AG04449 (cell line): ENCODE measurements at regions of chr11 and their contacts with region 1.

Region 1: GRCh38 chr11:93225662-93226061 is 27.9 kb upstream of the SLC36A4 start:
- DNase-seq: no peak
- H3K4me3 ChIP-seq: no peak overlapping the region
- CTCF ChIP-seq: no peak

Region 2: DNA sequence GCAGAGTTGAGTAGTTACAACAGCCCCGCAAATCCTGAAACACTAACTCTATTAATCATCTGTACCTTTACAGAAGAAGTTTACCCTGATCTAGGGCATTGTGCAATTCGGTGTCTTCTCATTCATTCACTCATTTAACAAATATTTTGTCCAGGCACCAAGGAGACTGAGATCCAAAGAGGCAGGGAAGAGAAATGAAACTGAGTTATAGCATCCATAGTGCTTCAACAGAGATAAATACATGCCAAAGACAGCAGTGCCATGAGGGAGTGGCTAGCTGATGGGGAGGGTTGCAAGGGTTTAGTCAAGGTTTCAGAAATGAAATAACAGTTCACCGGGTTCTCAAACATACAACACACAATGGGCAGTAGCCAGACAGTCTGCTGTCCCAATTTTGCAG is 296.4 kb before region 1 on chr11:
- CTCF ChIA-PET with region 1: no interaction called
- POLR2A ChIA-PET with region 1: no interaction called
- DNase-seq: no peak
- H3K4me3 ChIP-seq: no peak overlapping the region
- CTCF ChIP-seq: no peak

Region 3: DNA sequence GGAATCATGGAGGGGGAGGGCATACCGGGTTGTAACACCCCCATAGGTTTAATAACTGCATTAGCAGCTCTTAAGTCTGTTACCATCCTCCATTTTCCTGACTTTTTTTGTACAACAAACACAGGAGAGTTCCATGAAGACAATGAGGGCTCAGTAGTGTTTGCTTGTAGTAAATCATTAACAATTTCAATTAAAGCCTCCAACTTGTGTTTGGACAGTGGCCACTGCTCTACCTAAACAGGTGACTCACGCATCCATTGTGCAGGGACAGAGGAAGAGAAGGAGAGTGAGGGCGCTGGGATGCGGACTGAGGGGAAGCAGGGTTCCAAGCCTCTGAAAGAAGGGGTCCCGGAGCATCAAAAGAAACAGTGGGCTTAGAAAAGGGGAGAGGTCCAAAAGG is 277.5 kb before region 1 on chr11:
- CTCF ChIA-PET with region 1: interaction called, 82 read pairs
- POLR2A ChIA-PET with region 1: no interaction called
- DNase-seq: no peak
- H3K4me3 ChIP-seq: no peak overlapping the region
- CTCF ChIP-seq: no peak

Region 4: DNA sequence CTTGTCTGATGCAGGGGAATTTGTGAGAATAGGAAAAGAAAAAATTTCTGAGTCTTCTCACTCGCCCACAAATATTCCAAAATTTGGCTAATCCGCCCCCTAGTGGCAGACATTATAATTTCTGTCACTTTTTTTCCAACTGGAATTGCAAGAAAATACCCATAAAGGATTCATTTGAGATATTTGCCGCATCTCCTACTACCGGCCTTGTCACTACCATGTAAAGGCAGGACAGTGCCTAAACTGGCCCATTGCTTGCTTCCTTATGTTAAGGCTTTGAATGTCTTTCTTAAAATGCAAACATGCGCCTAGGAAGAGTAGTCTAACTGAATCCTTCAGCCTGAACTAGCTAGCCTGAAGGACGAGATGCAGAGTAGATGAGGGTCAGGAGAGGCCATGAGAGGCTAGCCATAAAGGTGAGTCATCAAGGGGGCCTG is 426.5 kb after region 1 on chr11:
- CTCF ChIA-PET with region 1: interaction called, 21 read pairs
- POLR2A ChIA-PET with region 1: no interaction called
- DNase-seq: no peak
- H3K4me3 ChIP-seq: no peak overlapping the region
- CTCF ChIP-seq: peak; percentile 27